Mucosa of descending colon (tissue), 3 donors: ENCODE measurements at regions of chr16 and their contacts with region 1.

Region 1: GRCh38 chr16:67183627-67184328 is at the start of gene MATCAP1:
- DNase-seq: peak; percentile 93 to 96 (median 95)
- ATAC-seq: peak; percentile 92
- H3K4me3 ChIP-seq: peak within 1 kb of the TSS; percentile 43
- H3K4me1 ChIP-seq: peaks cover 25% of the 10 kb centered on the region
- CTCF ChIP-seq: no peak
- total RNA-seq, gene MATCAP1: 24.8 to 35.1 (median 29.2) TPM

Region 2: GRCh38 chr16:66977341-66978113 is 206.3 kb before region 1 on chr16:
- intact Hi-C with region 1: loop called in 1 of 2 experiments (anchors 10 kb)
- DNase-seq: peak; percentile 91 to 96 (median 93)
- ATAC-seq: peak; percentile 95
- H3K4me3 ChIP-seq: no peak overlapping the region
- H3K4me1 ChIP-seq: peaks cover 5% of the 10 kb centered on the region
- CTCF ChIP-seq: peak; percentile 93

Region 3: DNA sequence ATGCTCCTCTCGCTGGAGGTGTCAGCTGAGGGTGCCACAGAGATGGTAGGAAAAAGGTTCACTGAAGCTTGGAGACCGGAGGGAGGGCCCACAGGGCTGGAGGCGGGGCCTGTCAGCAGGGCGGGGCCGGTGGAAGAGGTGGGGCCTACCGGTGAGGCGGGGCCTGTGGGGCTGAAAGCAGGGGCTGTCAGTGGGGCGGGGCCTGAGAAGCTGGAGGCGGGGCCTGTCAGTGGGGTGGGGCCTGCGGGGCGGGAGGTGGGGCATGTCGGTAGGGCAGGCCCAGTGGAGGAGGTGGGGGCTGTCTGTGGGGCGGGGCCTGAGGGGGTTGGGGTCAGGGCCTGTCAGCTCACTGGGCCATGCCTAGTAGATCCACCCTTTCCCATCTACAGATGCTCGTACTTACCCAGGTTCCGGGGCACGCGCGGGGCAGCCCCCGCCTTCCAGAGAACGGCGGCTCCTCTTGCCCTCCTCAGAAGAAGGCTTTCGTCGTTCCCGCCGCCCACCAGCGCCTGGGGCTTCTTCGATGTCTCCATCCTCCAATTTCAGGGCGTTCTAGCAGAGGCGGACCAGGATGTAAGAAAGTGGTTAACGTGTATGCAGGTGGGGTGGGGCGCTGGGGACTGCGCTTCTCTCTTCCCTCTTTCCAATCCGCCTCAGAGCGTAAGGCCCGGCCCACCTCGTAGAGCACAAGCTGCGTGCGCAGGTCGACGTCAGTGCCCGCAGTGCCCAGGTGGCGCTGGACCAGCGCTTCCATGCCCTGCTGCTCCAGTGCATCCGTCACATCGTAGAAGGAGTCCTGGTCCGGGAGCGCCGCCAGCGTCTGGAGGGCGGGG is 53.0 kb after region 1 on chr16:
- intact Hi-C with region 1: no loop called
- DNase-seq: peak; percentile 55 to 73 (median 72)
- ATAC-seq: peak; percentile 67
- H3K4me3 ChIP-seq: no peak overlapping the region
- H3K4me1 ChIP-seq: peaks cover 16% of the 10 kb centered on the region
- CTCF ChIP-seq: no peak